Calu3 (cell line): ENCODE measurements at regions of chr2 and their contacts with region 1.

Region 1: DNA sequence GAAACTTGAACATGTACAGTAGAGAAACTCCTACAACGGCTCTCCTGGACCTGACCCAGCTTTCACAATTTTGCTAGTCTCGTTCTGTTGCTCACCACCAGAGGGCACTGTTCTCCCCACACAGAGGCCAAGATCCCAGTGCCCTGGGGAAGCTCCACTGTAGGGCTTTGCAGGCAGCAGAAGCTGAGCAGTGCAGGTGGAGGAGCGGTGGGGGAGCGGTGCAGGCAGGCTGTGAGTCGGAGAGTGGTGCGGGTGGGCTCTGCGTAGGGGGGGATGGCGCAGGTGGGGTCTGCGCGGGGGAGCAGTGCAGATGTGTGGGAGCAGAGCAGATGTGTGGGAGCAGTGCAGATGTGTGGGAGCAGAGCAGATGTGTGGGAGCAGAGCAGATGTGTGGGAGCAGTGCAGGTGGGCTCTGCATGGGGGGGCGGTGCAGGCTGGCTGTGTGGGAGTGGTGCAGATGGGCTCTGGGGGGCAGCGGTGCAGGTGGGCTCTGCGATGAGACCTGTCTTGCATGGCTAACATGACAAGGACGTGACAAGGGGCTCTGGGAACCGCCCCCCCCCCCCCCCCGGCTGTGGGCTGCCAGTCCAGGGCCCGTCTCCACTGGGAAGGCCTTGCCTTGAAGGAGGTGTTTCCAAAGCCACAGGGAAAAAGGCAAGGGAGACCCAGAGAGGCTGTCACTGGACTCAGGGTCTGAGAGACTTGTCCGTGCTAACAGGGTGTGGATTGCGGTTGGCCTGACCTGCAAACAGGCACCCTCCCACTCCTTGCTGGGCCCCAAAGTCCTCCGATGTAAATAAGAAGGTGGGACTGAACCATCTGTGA is 7.3 kb downstream of the CYS1 start:
- DNase-seq: peak; percentile 86
- H3K4me3 Mint-ChIP-seq: no peak overlapping the region
- H3K27ac Mint-ChIP-seq: no peak overlapping the region
- H3K4me1 Mint-ChIP-seq: peaks cover 10% of the 10 kb centered on the region
- H3K27me3 Mint-ChIP-seq: peaks cover 58% of the 10 kb centered on the region
- CTCF ChIP-seq: peak; percentile 77

Region 2: GRCh38 chr2:9830690-9831410 is 242.0 kb before region 1 on chr2:
- CTCF ChIA-PET with region 1: no interaction called
- intact Hi-C with region 1: no loop called
- DNase-seq: peak; percentile 52
- H3K4me3 Mint-ChIP-seq: peak overlapping the region; percentile 12
- H3K27ac Mint-ChIP-seq: peak overlapping the region; percentile 91
- H3K4me1 Mint-ChIP-seq: peaks cover 32% of the 10 kb centered on the region
- H3K27me3 Mint-ChIP-seq: no peaks in the 10 kb centered on the region
- CTCF ChIP-seq: no peak

Region 3: DNA sequence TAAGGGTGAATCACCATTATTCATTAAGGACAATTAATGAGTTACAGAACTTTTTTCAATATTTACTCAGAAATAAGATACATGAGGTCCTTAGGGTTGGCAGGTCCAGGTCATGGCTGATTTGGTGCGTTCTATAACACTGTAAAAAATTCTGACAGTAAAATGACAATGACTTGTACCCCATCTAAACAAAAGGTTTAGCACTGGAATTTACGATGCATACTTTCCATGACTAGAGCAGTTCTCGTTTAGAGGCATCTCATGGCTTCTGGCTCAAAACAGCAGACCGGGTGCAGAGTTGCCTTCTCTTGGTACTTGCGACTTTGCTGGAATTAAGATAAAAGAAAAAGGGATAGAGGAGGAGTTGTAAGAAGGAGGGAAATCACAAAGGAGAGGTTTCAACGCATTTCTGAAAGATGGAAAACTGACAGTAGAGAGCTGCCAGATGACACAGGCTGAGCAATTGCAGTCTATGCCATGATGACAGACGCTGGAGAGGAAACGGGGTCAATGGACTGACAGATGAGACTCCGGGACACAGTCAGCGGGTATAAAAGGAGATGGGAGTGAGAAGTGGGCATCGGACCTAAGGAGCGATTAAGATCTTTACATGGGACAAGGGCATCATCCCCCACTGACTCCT is 11.5 kb after region 1 on chr2:
- CTCF ChIA-PET with region 1: interaction called, 13 read pairs
- intact Hi-C with region 1: no loop called
- DNase-seq: no peak
- H3K4me3 Mint-ChIP-seq: no peak overlapping the region
- H3K27ac Mint-ChIP-seq: no peak overlapping the region
- H3K4me1 Mint-ChIP-seq: peaks cover 49% of the 10 kb centered on the region
- H3K27me3 Mint-ChIP-seq: peaks cover 45% of the 10 kb centered on the region
- CTCF ChIP-seq: no peak

Region 4: GRCh38 chr2:10122386-10123280 is 49.8 kb after region 1 on chr2 and contains the start of gene RRM2:
- CTCF ChIA-PET with region 1: interaction called, 21 read pairs
- intact Hi-C with region 1: no loop called
- DNase-seq: peak; percentile 96
- H3K4me3 Mint-ChIP-seq: peak within 1 kb of the TSS; percentile 88
- H3K27ac Mint-ChIP-seq: peak within 1 kb of the TSS; percentile 92
- H3K4me1 Mint-ChIP-seq: peaks cover 26% of the 10 kb centered on the region
- H3K27me3 Mint-ChIP-seq: no peaks in the 10 kb centered on the region
- CTCF ChIP-seq: no peak
- total RNA-seq, gene RRM2: 154 and 168 TPM in 2 replicates

Region 5: DNA sequence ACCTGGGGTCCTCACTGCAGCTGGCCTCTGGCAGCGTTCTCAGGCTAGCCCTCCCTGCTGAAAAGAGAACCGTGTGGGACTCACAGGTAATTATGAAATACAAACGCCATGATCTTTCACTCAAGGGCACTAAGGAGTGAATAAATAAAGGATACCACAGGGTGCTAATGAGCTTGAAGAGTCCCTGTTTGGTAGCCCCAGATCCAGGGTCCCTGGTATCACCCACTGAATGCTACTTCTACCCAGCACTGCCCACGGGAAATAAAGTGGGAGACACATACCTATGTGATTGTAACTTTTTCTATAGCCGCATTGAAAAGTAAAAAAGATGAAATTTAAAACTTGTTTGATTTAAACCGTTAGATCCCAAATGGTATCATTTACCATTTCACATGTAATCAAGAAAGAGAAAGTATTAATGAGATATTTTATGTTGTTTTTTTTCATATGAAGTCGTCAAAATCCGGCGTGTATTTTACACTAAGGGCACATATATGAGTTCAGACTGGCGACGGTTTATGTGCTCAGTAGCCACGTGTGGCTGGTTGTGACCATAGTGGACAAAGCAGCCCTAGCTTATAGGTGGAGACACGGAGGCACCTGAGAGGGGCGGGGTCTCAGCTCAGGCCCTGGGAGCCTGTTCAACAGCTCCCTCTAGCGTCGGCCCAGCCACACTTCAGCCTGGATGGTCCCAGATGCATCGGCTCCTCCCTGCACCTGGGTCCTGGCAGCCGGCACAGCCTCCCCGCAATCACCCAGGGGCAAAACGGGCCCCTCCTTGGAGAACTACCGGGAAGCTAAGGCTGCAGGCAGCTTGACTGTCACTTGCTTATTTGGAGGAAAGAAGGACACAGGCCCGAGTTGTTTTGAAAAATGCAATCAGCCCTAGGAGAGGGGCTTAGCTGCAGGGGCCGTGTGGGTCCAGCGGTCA is 336.0 kb after region 1 on chr2:
- CTCF ChIA-PET with region 1: interaction called, 13 read pairs
- intact Hi-C with region 1: no loop called
- DNase-seq: peak; percentile 91
- H3K4me3 Mint-ChIP-seq: peak overlapping the region; percentile 61
- H3K27ac Mint-ChIP-seq: peak overlapping the region; percentile 91
- H3K4me1 Mint-ChIP-seq: peaks cover 60% of the 10 kb centered on the region
- H3K27me3 Mint-ChIP-seq: no peaks in the 10 kb centered on the region
- CTCF ChIP-seq: peak; percentile 93

Region 6: DNA sequence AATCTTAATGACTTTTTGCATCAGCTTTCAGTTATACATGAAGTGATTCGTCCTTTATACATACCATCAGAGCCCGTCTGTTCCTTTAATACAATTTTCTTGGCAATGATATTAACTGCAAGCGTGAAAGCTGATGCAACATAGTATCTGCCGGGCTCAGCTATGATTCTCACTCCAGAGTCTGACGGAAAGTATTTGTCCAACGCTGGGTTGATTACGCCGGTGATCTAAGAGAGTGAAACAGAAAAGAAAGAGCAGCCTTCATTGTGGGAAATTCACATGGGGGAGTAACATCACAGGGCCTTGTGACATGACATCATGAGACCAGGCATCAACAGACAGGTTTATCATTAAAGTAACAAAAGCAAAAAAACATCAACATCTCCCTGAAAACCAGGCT is 369.1 kb after region 1 on chr2:
- CTCF ChIA-PET with region 1: no interaction called
- intact Hi-C with region 1: loop called (anchors 2 kb)
- DNase-seq: no peak
- H3K4me3 Mint-ChIP-seq: no peak overlapping the region
- H3K27ac Mint-ChIP-seq: no peak overlapping the region
- H3K4me1 Mint-ChIP-seq: peaks cover 8% of the 10 kb centered on the region
- H3K27me3 Mint-ChIP-seq: no peaks in the 10 kb centered on the region
- CTCF ChIP-seq: no peak